ENCODE measurements at regions of chr7 and their contacts with region 1.

Region 1: DNA sequence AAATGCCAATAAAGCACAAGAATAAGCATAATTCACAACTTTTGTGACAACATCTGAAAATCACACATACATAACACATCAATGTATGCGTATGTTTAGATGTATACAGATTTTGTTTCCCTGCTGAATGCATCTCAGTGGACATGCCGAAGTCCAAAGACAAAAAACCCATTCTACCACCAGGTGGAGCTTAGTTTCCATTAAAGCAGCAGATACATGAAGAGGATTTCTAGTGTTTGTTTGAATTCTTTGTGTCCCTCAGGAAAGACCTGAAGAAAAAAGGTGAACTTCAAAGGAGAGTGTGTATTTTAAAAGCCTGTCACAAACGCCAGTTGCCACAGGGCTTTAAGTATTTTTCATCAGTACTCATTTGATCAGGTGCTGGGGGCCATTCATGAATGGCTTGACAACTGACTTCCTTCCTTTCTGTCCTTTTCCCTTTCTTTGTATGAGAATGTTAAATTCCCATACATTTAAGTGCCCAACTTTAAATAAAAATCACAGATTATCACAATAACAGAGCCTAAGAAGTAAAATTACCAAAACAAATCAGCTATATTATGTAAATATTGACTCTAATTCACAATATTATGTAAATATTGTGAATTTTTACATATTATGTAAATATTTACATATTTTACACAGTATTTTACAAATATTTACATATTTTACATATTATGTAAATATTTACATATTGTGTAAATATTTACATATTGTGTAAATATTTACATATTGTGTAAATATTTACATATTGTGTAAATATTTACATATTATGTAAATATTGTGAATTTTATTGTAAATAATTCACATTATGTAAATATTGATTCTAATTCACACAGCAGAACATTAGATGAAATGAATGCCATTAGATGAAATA is 343.0 kb downstream of the CRPPA start:
- DNase-seq: peak; percentile 75
- H3K4me3 Mint-ChIP-seq: no peak overlapping the region
- H3K27ac Mint-ChIP-seq: no peak overlapping the region
- H3K4me1 Mint-ChIP-seq: peaks cover 11% of the 10 kb centered on the region
- H3K27me3 Mint-ChIP-seq: no peaks in the 10 kb centered on the region
- CTCF ChIP-seq: peak; percentile 56

Region 2: DNA sequence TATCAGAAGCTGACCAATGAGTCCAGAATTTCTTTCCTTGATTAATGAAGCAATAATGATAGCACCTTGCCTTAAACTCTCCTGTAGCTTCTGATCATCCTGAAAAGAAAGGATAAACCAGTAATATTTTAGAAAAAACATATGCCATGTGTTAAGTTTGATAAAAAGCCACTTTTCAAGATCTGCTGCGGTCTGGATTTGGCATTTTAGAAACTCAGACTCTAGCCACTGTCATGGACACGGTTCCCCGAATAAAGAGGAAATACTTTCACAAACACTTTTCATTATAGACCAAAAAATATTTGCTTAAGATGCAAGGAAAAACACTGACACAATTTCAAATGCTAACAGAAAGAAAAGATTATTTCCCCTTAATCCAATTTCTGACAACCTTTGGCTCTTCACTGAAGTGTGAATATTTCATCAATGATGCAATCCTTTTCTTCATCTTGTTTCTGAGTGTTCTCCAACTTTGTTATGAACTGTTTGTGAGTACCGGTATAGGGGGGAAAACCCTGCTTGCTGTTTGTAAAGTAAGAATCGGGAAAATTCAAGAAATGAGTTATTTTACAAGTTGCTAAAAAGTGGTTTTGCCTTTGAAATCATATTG is 13.5 kb after region 1 on chr7:
- CTCF ChIA-PET with region 1: interaction called, 76 read pairs
- POLR2A ChIA-PET with region 1: no interaction called
- intact Hi-C with region 1: no loop called
- DNase-seq: no peak
- H3K4me3 Mint-ChIP-seq: no peak overlapping the region
- H3K27ac Mint-ChIP-seq: no peak overlapping the region
- H3K4me1 Mint-ChIP-seq: peaks cover under 1% of the 10 kb centered on the region
- H3K27me3 Mint-ChIP-seq: no peaks in the 10 kb centered on the region
- CTCF ChIP-seq: no peak

Region 3: GRCh38 chr7:16098585-16099179 is 20.4 kb after region 1 on chr7:
- CTCF ChIA-PET with region 1: interaction called, 76 read pairs
- POLR2A ChIA-PET with region 1: interaction called, 3 read pairs
- intact Hi-C with region 1: loop called (anchors 1 kb)
- DNase-seq: peak; percentile 59
- H3K4me3 Mint-ChIP-seq: no peak overlapping the region
- H3K27ac Mint-ChIP-seq: no peak overlapping the region
- H3K4me1 Mint-ChIP-seq: peaks cover 4% of the 10 kb centered on the region
- H3K27me3 Mint-ChIP-seq: no peaks in the 10 kb centered on the region
- CTCF ChIP-seq: peak; percentile 82

Region 4: GRCh38 chr7:16559497-16560179 is 481.3 kb after region 1 on chr7:
- CTCF ChIA-PET with region 1: interaction called, 78 read pairs
- POLR2A ChIA-PET with region 1: interaction called, 6 read pairs
- intact Hi-C with region 1: no loop called
- DNase-seq: no peak
- H3K4me3 Mint-ChIP-seq: no peak overlapping the region
- H3K27ac Mint-ChIP-seq: no peak overlapping the region
- H3K4me1 Mint-ChIP-seq: no peaks in the 10 kb centered on the region
- H3K27me3 Mint-ChIP-seq: no peaks in the 10 kb centered on the region
- CTCF ChIP-seq: no peak